CD14-positive monocyte (primary cell): ENCODE measurements at regions of chr17 and their contacts with region 1.

Region 1: DNA sequence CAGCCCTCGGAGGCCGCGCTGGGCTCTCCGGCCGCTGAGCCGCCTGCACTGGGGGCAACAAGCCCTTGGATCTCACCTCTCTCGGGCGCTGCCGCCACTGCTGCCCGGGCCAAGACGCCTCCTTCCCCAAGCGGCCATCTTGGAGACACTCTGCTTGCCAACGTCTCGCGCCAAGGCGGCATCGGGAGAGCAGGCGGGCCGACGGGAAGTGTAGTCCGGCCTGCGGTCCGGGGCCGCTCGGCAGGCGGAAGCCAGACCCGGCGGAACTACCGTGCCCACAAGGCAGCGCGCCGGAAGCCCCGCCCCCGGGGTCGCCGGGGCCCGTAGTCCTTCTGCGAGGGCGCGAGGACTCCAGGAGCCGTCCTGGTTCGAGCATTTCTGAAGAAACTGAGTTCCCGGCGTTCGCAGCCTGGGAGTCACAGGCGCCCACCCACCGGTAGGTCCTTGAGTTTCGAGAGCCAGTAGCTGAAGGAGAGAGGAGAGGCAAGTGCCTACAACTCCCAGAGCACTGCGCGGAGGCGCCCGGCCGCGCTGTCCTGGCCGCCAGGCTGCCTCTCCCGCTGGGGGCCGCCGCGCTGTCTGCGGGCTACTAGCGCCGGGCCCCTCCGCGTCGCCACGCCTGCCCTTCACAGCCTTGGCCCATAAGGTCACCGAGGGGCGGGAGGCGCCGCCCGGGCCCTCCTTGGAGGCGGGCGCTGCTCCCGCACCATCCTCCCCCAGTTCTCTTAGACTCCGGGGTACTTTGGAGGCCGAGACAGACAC is at the start of gene TMEM11:
- DNase-seq: peak; percentile 94 to 95 (median 95)
- H3K4me3 ChIP-seq: peak within 1 kb of the TSS; percentile 81 to 95 (median 93)
- H3K4me3 Mint-ChIP-seq: peak within 1 kb of the TSS; percentile 87 to 97
- H3K27ac ChIP-seq: peak within 1 kb of the TSS; percentile 93
- H3K27ac Mint-ChIP-seq: peak within 1 kb of the TSS; percentile 90 to 98 (median 97)
- H3K4me1 ChIP-seq: peaks cover 56 to 72% of the 10 kb centered on the region in 2 donors
- H3K4me1 Mint-ChIP-seq: peaks cover 69% of the 10 kb centered on the region
- H3K27me3 ChIP-seq: no peaks in the 10 kb centered on the region
- H3K27me3 Mint-ChIP-seq: no peaks in the 10 kb centered on the region
- CTCF ChIP-seq: peak; percentile 20
- polyA plus RNA-seq, gene TMEM11: 25.7 to 68.1 (median 59.5) TPM

Region 2: GRCh38 chr17:21043286-21044232 is 170.6 kb before region 1 on chr17:
- intact Hi-C with region 1: loop called in 1 of 2 experiments (anchors 5 kb)
- DNase-seq: peak in 1 of 3 donors; percentile 99
- H3K4me3 ChIP-seq: peak overlapping the region; percentile 41 to 89 (median 42)
- H3K4me3 Mint-ChIP-seq: peak overlapping the region; percentile 72 to 84
- H3K27ac ChIP-seq: peak overlapping the region; percentile 74 to 85
- H3K27ac Mint-ChIP-seq: peak overlapping the region; percentile 80 to 90 (median 85)
- H3K4me1 ChIP-seq: peaks cover 28 to 30% of the 10 kb centered on the region in 2 donors
- H3K4me1 Mint-ChIP-seq: peaks cover 25% of the 10 kb centered on the region
- H3K27me3 ChIP-seq: no peaks in the 10 kb centered on the region
- H3K27me3 Mint-ChIP-seq: peaks cover 0 to 2% (median 0%) of the 10 kb centered on the region in 3 donors
- CTCF ChIP-seq: peak; percentile 95

Region 3: DNA sequence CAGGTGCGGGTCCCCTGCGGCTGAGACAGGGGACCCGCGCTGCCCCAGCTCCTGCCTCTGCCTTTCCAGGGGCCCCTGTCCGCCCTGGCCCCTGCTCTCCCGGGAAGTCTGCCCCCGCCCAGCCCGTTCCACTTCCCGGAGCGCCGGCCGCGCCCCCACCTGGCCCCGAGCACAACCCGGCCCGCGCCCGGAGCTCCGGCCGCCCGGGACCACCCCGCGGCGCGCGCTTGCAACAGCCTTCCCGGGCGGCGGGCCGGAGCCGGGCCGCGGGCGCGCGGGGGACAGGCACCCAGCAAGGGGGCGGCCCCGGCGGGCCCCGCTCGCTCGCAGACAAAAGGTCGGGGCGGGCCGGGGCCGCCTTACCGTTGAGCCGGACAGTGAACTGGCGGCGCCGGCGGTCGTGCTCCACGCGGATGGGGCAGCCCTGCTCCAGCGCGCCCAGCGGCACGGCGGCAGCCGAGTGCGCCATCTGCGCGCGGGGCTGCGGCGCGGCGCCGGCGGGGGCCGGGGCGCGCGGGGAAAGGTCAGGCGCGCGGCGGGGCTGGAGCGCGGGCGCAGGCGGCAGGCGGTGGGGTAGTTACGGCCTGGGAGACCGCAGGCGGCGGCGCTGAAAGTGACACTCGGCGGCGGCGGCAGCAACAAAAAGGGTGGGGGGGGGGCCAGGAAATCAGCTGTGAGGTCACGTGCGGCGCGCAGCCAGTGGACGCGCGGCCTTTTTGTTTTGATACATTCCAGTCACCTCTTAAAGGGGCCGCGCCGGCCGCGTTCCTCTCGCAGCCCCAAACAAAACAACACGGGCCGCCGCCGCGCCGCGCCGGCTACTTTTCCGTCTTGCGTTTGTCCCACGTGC is 38.8 kb after region 1 on chr17 and contains the start of gene NATD1:
- intact Hi-C with region 1: loop called (anchors 5 kb)
- DNase-seq: peak; percentile 73 to 83 (median 81)
- H3K4me3 ChIP-seq: peak within 1 kb of the TSS; percentile 51 to 82 (median 81)
- H3K4me3 Mint-ChIP-seq: peak within 1 kb of the TSS; percentile 82 to 90
- H3K27ac ChIP-seq: peak within 1 kb of the TSS in 1 of 2 donors; percentile 13
- H3K27ac Mint-ChIP-seq: peak within 1 kb of the TSS in 6 of 7 donors; percentile 49 to 77 (median 67)
- H3K4me1 ChIP-seq: peaks cover 21 to 37% of the 10 kb centered on the region in 2 donors
- H3K4me1 Mint-ChIP-seq: peaks cover 36% of the 10 kb centered on the region
- H3K27me3 ChIP-seq: no peaks in the 10 kb centered on the region
- H3K27me3 Mint-ChIP-seq: peaks cover 5 to 10% (median 6%) of the 10 kb centered on the region in 3 donors
- CTCF ChIP-seq: no peak
- polyA plus RNA-seq, gene NATD1: 3.0 to 13.6 (median 3.8) TPM